CD4-positive, alpha-beta T cell (primary cell): ENCODE measurements at regions of chr10 and their contacts with region 1.

Region 1: DNA sequence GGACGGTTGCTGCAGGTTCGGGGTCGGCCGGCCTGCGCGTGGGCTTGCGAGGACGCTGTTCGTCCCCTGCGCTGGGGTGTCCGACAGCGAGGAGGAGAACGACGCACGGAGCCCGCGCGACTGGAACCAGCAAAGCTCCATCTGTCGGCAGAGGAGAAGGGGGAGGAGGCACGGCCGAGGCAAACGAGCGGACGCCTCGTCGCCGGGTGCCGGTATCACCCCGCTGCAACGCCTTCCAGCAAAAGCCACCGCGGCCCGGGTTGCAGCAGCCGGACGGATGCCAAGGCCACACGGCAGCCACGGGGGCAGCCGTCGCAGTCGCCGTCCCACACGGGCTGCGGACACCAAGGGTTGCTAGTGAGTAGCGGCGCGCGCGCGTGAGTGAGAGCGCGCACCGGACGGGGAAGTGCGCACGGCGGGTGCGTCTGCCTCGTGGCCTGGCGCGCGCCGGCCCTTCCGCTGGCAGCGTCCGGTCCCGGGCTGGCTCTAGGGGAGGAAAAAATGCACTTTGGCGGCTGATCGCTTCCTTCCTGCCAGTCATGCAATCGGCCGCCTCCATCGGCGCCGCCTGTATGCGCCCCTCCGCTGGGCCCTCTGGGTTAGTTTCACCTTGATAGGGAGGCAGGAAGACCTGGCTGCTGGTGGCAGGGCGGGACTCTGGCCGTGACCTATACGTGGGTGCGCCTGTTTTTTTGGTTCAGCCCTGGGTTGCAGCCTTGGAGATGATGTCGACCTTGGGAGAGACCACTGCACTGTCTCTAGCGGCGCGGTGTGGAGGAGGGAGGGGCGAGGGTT is 434 bp downstream of the STAMBPL1 start:
- DNase-seq: peak; percentile 53 to 86 (median 64)
- ATAC-seq: peak; percentile 72
- H3K4me3 ChIP-seq: peak overlapping the region; percentile 84
- H3K4me3 Mint-ChIP-seq: peak overlapping the region; percentile 99
- H3K27ac ChIP-seq: peak overlapping the region; percentile 76 to 77
- H3K27ac Mint-ChIP-seq: peak overlapping the region; percentile 91
- H3K4me1 ChIP-seq: peaks cover 25% of the 10 kb centered on the region
- H3K4me1 Mint-ChIP-seq: peaks cover 73% of the 10 kb centered on the region
- H3K27me3 ChIP-seq: no peaks in the 10 kb centered on the region
- H3K27me3 Mint-ChIP-seq: no peaks in the 10 kb centered on the region
- CTCF ChIP-seq: peak; percentile 15

Region 2: GRCh38 chr10:88828310-88828709 is 52.2 kb before region 1 on chr10:
- CTCF ChIA-PET with region 1: interaction called, 3 read pairs
- POLR2A ChIA-PET with region 1: interaction called, 33 read pairs
- intact Hi-C with region 1: no loop called
- DNase-seq: no peak
- ATAC-seq: no peak
- H3K4me3 ChIP-seq: no peak overlapping the region
- H3K4me3 Mint-ChIP-seq: no peak overlapping the region
- H3K27ac ChIP-seq: no peak overlapping the region
- H3K27ac Mint-ChIP-seq: no peak overlapping the region
- H3K4me1 ChIP-seq: peaks cover 26% of the 10 kb centered on the region
- H3K4me1 Mint-ChIP-seq: peaks cover 77% of the 10 kb centered on the region
- H3K27me3 ChIP-seq: no peaks in the 10 kb centered on the region
- H3K27me3 Mint-ChIP-seq: no peaks in the 10 kb centered on the region
- CTCF ChIP-seq: no peak

Region 3: DNA sequence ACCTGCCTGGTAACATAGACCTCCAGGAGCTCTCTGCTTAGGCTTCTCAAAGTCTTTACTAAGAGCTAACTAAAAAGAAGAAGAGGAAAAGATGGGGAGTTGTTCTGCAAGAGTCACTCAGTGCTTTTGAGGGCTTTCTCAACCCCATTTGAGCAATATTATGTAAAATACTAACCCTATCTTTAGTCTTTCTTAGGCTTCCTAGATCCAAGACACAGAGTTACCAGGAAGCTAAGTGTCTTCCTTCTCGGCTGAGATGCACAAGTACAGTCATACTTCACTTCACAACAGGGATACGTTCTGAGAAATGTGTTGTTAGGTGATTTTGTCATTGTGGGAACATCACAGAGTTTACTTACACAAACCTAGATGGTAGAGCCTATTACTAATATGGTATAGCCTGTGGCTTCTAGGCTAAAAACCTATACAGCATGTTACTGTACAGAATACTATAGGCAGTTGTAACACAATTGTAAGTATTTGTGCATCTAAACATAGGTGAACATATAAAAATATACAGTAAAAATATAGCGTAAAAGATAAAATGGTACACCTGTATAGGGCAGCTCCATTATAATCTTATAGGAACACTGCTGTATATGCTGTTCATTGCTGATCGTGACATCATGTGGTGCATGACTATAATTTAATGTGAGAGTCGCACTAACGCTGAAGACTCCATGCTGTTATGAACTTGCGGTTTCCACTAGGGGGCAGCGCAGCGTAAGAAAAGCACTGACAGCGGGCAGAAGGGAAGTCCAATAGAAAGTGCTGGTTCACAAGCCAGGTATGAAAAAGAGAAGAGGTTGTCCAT is 45.2 kb before region 1 on chr10:
- CTCF ChIA-PET with region 1: interaction called, 5 read pairs
- POLR2A ChIA-PET with region 1: interaction called, 14 read pairs
- intact Hi-C with region 1: loop called (anchors 1 to 5 kb)
- DNase-seq: peak; percentile 77 to 93 (median 83)
- ATAC-seq: peak; percentile 91
- H3K4me3 ChIP-seq: no peak overlapping the region
- H3K4me3 Mint-ChIP-seq: no peak overlapping the region
- H3K27ac ChIP-seq: no peak overlapping the region
- H3K27ac Mint-ChIP-seq: no peak overlapping the region
- H3K4me1 ChIP-seq: peaks cover 17% of the 10 kb centered on the region
- H3K4me1 Mint-ChIP-seq: peaks cover 33% of the 10 kb centered on the region
- H3K27me3 ChIP-seq: no peaks in the 10 kb centered on the region
- H3K27me3 Mint-ChIP-seq: no peaks in the 10 kb centered on the region
- CTCF ChIP-seq: peak; percentile 93

Region 4: DNA sequence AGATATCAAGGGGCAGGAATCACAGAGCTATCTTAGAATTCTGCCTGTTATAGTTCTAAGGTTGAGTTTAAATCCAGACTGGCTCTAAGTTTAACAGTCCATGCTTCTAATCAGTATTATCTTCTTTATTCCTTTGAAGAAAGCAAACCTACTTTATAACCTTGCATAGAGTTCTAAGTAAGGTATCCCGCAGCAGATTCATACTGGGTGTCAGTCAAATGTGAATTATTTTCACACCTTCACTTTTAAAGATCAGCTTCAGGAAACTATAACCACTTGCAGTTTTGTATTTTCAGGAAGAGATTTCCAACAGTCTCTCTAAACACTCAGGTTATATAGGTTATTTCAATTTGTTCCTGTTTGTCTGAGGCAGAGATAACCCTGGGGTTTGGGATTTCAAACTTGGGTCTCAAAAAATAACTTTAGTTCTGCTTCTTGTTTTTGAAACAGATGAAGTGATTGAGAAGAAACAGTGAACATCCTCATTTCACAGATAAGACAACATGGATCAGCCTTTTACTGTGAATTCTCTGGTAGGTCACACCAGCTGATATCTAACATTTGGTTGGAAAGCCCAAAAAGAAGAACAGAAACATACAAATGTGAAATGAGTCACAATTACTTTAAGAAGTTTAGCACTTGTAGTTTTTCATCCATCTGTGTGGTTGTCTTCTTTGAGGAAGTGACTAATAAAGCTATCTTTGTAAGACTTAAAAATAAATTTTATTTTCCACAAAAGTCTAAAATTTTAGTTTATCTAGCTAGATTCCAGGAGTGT is 20.9 kb after region 1 on chr10:
- CTCF ChIA-PET with region 1: interaction called, 4 read pairs
- POLR2A ChIA-PET with region 1: interaction called, 25 read pairs
- intact Hi-C with region 1: no loop called
- DNase-seq: peak in 3 of 14 experiments; percentile 22 to 42 (median 38)
- ATAC-seq: no peak
- H3K4me3 ChIP-seq: no peak overlapping the region
- H3K4me3 Mint-ChIP-seq: no peak overlapping the region
- H3K27ac ChIP-seq: no peak overlapping the region
- H3K27ac Mint-ChIP-seq: peak overlapping the region; percentile 28
- H3K4me1 ChIP-seq: peaks cover 13% of the 10 kb centered on the region
- H3K4me1 Mint-ChIP-seq: peaks cover 46% of the 10 kb centered on the region
- H3K27me3 ChIP-seq: no peaks in the 10 kb centered on the region
- H3K27me3 Mint-ChIP-seq: no peaks in the 10 kb centered on the region
- CTCF ChIP-seq: no peak

Region 5: DNA sequence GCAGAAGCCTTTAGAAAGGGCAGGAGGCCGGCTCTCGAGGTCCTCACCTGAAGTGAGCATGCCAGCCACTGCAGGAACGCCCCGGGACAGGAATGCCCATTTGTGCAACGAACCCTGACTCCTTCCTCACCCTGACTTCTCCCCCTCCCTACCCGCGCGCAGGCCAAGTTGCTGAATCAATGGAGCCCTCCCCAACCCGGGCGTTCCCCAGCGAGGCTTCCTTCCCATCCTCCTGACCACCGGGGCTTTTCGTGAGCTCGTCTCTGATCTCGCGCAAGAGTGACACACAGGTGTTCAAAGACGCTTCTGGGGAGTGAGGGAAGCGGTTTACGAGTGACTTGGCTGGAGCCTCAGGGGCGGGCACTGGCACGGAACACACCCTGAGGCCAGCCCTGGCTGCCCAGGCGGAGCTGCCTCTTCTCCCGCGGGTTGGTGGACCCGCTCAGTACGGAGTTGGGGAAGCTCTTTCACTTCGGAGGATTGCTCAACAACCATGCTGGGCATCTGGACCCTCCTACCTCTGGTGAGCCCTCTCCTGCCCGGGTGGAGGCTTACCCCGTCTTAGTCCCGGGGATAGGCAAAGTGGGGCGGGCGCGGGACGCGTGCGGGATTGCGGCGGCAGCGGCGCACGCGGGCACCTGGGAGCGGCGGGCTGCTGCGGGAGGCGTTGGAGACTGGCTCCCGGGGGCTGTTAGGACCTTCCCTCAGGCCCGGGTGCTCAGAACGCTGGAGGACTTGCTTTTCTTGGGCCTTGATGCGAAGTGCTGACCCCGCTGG is 110.1 kb after region 1 on chr10 and contains the start of gene FAS:
- CTCF ChIA-PET with region 1: interaction called, 4 read pairs
- POLR2A ChIA-PET with region 1: interaction called, 14 read pairs
- intact Hi-C with region 1: no loop called
- DNase-seq: peak; percentile 53 to 96 (median 75)
- ATAC-seq: peak; percentile 75
- H3K4me3 ChIP-seq: peak within 1 kb of the TSS; percentile 94
- H3K4me3 Mint-ChIP-seq: peak within 1 kb of the TSS; percentile 98
- H3K27ac ChIP-seq: peak within 1 kb of the TSS; percentile 80 to 89
- H3K27ac Mint-ChIP-seq: peak within 1 kb of the TSS; percentile 93
- H3K4me1 ChIP-seq: peaks cover 30% of the 10 kb centered on the region
- H3K4me1 Mint-ChIP-seq: peaks cover 80% of the 10 kb centered on the region
- H3K27me3 ChIP-seq: no peaks in the 10 kb centered on the region
- H3K27me3 Mint-ChIP-seq: no peaks in the 10 kb centered on the region
- CTCF ChIP-seq: no peak
- total RNA-seq, gene FAS: 23.8 to 28.2 TPM